ENCODE measurements at regions of chr4 and their contacts with region 1.

Region 1: GRCh38 chr4:112509243-112510141 is 6.5 kb downstream of the NEUROG2 start:
- DNase-seq: no peak
- H3K4me3 Mint-ChIP-seq: peak overlapping the region; percentile 61
- H3K27ac Mint-ChIP-seq: peak overlapping the region; percentile 60
- H3K4me1 Mint-ChIP-seq: peaks cover 36% of the 10 kb centered on the region
- H3K27me3 Mint-ChIP-seq: peaks cover 85% of the 10 kb centered on the region

Region 2: DNA sequence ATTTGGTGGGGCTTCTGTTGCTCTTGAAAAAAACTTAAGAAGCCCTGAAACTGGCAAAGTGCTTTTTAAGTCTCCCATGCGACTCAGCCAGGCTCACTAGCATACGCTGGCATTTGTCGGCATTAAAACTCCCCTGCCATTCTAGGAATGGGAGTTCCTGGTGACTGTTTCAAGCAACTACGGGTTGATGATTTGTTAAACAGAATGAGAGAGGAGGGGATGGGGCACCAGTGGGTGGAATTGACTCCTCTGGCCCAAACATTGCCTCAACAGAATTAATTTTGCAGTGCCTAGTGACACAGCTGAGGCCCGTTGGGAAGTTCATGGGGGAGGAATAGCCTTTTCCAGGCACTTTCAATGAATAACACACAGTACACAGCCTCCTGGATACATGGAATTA is 23.6 kb before region 1 on chr4:
- CTCF ChIA-PET with region 1: no interaction called
- POLR2A ChIA-PET with region 1: no interaction called
- DNase-seq: no peak
- H3K4me3 Mint-ChIP-seq: no peak overlapping the region
- H3K27ac Mint-ChIP-seq: no peak overlapping the region
- H3K4me1 Mint-ChIP-seq: no peaks in the 10 kb centered on the region
- H3K27me3 Mint-ChIP-seq: peaks cover 2% of the 10 kb centered on the region

Region 3: DNA sequence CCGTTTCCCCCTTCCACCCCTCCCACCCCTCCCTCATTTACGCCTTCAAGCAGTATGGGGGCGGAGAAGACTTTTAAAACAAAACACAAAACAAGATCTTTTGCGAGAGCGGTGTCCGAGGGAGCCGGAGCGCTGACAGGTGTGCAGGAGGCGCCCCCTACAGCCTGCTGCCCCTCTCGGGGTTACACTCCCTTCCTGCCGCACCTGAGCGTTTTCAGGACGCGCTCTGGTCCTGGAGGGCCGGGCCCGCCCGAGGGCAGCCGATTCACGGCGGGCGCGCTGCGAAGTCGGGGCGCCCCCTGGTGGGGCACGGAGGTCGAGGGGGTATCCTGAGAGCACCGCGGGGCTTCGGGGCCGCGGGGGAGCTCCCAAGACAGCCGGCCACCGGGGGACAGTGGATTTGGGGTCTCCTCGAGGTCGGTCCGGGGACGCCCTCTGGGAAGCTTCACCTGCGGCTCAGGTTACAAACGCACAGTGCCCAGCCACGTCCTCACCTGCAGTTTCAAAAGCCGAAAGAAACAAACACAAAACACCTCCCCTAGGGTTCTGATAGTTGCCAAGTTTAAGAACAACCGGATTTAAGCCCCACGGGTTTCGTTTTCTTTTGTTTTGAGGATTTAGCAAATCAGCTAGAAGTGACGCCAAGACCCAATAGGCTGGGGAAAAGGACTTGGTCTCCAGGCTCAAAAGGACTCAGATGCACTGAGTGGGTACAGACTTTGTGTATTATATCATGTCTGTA is 14.4 kb after region 1 on chr4:
- CTCF ChIA-PET with region 1: interaction called, 45 read pairs
- POLR2A ChIA-PET with region 1: no interaction called
- DNase-seq: peak; percentile 72
- H3K4me3 Mint-ChIP-seq: peak overlapping the region; percentile 64
- H3K27ac Mint-ChIP-seq: no peak overlapping the region
- H3K4me1 Mint-ChIP-seq: peaks cover 45% of the 10 kb centered on the region
- H3K27me3 Mint-ChIP-seq: peaks cover 83% of the 10 kb centered on the region

Region 4: GRCh38 chr4:112589206-112589605 is 79.7 kb after region 1 on chr4:
- CTCF ChIA-PET with region 1: no interaction called
- POLR2A ChIA-PET with region 1: no interaction called
- DNase-seq: no peak
- H3K4me3 Mint-ChIP-seq: no peak overlapping the region
- H3K27ac Mint-ChIP-seq: no peak overlapping the region
- H3K4me1 Mint-ChIP-seq: peaks cover 2% of the 10 kb centered on the region
- H3K27me3 Mint-ChIP-seq: no peaks in the 10 kb centered on the region

Region 5: DNA sequence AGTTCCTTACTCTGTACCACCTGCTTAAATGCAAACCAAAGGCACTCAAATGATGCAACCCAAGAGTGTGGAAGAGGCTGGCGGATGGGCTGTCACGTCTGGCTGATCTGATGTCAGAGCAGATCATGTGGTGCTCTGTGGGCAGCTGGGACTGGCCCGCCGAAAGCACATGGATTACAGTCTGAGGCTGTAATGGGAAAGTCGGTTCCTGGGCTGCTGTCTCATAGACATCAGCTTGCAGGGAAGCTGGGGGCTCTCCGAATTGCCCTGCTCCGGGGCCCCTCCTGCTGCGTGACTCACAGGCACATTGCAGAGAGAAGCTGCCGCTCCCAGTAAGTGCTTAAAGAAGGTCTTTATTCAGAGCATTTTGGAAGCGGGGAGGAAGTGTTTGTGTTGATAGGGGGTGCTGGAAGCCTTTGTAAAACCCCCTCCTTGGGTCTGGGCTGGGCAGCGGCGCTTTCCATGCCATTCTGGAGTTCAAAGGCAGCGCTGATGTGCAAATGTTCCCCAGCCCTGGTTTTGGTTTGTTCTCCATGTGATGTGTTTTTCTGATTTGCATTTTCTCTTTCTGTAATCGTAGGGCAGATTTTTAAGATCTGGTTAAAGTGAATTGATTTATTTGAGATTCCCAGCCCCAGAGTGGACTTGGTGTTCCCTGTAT is 308.6 kb after region 1 on chr4:
- CTCF ChIA-PET with region 1: no interaction called
- POLR2A ChIA-PET with region 1: no interaction called
- DNase-seq: peak; percentile 37
- H3K4me3 Mint-ChIP-seq: peak overlapping the region; percentile 59
- H3K27ac Mint-ChIP-seq: peak overlapping the region; percentile 74
- H3K4me1 Mint-ChIP-seq: peaks cover 12% of the 10 kb centered on the region
- H3K27me3 Mint-ChIP-seq: peaks cover 25% of the 10 kb centered on the region

Measured in activated CD4-positive, alpha-beta T cell treated with anti-CD3 and anti-CD28 coated beads, Interleukin-2, amount 10 ng/mL, durations not matched to agents 7 days and 5 days (primary cell).